GM18951 (cell line): ENCODE measurements at regions of chr11 and their contacts with region 1.

Region 1: GRCh38 chr11:66686801-66687750 is 9.4 kb upstream of the RBM4B start:
- POLR2A ChIP-seq: no peak

Region 2: DNA sequence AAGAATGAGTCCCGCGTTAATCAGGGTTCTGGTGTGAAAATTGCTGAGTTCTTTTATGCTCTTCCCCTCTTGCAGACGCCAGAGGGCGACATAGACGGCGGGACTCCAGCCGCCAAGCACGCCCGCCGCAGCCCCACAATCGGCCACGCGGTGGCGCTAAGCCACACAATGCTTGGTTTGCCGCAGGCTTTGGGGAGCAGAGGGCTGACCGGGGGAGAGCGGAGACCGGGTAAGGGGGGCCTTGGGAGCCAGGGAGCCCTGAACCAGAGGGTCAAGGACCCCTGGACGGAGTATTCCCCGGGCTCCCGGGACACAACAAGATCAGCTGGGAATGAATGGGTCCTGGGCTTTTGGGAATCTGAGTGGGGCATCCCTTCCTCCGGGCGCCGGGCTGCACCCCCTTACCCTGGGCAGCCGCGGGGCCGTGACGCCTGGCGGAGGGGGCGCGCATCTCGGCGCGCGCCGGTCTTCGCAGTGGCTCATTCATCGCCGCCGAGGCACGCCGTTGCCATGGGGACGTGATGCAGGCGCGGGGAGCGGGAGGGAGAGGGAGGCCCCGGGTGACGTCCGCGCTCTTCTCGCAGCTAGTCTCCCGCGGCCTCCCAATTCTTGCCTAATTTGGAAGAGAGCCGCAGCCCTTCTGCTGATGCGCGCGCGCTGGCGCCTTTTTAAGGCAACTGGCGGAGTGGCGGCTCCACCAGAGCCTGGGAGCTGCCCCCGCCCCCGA is 278.4 kb before region 1 on chr11:
- in situ Hi-C with region 1: loop called (anchors 10 kb)
- POLR2A ChIP-seq: no peak

Region 3: DNA sequence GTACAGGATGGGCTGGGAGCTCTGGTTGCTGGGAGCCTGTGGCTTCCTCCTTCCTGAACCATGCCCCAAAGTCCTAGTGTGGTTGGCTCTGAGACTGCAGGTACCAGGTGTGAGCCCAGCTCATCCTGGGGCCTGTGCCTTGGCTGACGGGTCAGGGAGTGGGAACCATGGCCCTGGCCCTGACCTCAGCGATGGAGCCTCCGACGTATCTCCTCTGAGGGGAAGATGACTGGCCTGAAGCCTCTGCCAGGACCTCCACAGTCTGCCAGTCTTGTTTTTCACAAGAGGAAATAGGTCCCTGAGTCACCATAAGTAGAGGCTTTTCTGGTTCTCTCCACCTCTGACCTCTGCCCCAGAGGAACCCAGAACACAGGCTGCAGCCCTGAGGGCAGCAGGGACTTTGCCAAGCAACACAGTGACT is 159.6 kb after region 1 on chr11:
- in situ Hi-C with region 1: no loop called
- POLR2A ChIP-seq: no peak